ENCODE measurements at regions of chr19 and their contacts with region 1.

Region 1: DNA sequence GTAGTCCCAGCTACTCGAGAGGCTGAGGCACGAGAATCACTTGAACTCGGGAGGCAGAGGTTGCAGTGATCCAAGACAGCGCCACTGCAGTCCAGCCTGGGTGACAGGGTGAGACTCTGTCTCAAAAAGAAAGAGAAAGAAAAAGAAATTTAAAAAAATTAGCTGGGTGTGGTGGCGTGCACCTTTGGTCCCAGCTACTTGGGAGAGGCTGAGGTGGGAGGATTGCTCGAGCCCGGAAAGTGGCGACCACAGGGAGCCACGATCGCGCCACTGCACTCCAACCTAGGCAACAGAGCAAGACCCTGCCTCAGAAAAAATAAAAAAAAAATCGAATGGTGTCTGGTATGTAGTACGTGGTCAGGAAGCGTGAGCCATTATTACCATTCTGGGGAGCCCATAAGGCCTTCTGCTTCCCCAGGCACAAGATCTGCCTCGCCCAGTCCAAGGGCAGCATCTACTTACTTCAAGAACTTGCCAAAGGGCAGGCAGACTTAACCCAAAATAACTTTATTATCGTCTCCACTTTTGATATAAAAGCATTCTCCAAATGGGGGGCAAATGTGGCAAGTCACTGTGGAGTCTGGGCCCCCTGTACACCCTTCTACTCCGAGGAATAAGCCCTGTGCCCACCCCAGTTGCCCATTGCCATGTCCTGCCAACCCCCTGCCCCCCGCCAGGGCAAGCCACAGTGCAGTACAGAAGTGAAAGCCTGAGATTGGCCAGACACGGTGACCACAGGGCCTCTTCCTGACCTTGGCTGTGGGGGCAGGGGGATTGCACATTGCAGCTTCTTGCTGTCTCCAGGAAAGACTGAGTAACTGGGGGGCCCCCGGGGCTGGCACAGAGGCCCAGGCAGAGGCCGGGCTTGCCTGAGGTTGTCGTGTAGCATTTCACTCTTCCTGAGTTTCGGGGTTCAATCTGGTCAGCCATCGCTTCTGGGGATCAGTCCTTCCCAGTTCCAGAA is 12.6 kb downstream of the CCL25 start:
- DNase-seq: no peak
- H3K4me3 ChIP-seq: no peak overlapping the region
- H3K27ac ChIP-seq: no peak overlapping the region
- H3K4me1 ChIP-seq: no peaks in the 10 kb centered on the region
- H3K27me3 ChIP-seq: no peaks in the 10 kb centered on the region
- CTCF ChIP-seq: no peak

Region 2: GRCh38 chr19:6730941-6731670 is 1334.1 kb before region 1 on chr19:
- CTCF ChIA-PET with region 1: no interaction called
- POLR2A ChIA-PET with region 1: interaction called, 12 read pairs
- intact Hi-C with region 1: no loop called
- DNase-seq: no peak
- H3K4me3 ChIP-seq: no peak overlapping the region
- H3K27ac ChIP-seq: no peak overlapping the region
- H3K4me1 ChIP-seq: peaks cover 11% of the 10 kb centered on the region
- H3K27me3 ChIP-seq: no peaks in the 10 kb centered on the region
- CTCF ChIP-seq: no peak

Region 3: DNA sequence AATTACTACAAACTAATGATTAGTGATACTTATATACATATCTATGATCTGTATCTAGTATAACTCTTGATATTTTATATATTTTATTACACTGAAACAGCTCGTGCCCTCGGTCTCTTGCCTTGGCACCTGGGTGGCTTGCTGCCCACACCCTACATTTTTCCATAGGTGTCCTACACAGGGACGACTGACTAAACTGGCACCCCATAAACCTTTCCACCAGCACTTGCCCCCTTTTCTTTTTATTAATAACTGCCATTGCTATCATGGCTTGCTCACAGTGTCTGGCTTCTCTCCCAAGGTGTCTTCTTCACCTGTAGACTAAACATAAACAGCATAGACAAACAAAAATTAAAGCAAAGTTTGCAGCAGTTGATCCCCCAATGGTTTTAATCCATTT is 271.7 kb before region 1 on chr19:
- CTCF ChIA-PET with region 1: no interaction called
- POLR2A ChIA-PET with region 1: no interaction called
- intact Hi-C with region 1: no loop called
- DNase-seq: no peak
- H3K4me3 ChIP-seq: no peak overlapping the region
- H3K27ac ChIP-seq: no peak overlapping the region
- H3K4me1 ChIP-seq: no peaks in the 10 kb centered on the region
- H3K27me3 ChIP-seq: peaks cover 27% of the 10 kb centered on the region
- CTCF ChIP-seq: no peak

Measured in A673 (cell line).